PC-3 (cell line): ENCODE measurements at regions of chrX and their contacts with region 1.

Region 1: DNA sequence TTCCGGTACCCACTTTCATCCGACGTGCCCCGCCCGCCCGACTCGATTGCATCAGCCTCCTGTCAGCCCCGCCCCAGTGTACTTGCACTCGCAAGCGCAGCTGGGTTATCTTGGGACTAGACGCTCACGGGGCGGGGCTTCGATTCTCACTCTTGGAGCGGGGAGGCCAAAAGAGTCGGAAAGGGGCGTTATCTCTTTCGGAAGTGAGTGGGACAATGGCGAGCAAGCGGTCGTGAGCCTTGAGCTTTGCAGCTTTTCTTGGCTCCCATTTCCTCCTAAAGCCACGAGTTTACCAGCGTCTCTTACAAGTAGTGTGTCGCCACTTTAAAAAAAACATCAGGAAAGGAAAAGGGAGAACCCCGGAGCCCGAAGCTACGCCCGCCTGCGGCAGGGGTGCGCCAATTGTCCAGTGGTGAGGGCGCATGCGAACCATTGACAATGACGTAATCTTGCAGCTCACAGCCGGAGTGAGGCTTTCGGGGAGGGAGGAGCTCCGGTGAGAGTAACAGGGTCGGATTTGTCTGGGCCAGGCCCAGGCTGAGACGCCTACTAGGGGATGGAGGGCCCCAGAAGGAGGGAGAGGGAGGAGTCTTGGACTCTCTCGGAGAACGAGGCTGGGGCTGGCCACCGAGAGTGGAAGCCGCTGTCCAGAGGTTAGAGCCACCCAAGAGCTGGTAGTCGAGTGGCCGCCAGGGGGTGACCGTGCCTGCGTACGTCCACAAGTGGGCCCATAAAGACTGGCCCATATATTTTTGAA is 109.5 kb downstream of the GNL3L start:
- DNase-seq: peak; percentile 91
- ATAC-seq: peak; percentile 94
- H3K4me3 ChIP-seq: peak overlapping the region; percentile 77
- H3K27ac ChIP-seq: peak overlapping the region; percentile 82
- H3K4me1 ChIP-seq: peaks cover 5% of the 10 kb centered on the region
- H3K27me3 ChIP-seq: no peaks in the 10 kb centered on the region
- CTCF ChIP-seq: peak; percentile 78

Region 2: DNA sequence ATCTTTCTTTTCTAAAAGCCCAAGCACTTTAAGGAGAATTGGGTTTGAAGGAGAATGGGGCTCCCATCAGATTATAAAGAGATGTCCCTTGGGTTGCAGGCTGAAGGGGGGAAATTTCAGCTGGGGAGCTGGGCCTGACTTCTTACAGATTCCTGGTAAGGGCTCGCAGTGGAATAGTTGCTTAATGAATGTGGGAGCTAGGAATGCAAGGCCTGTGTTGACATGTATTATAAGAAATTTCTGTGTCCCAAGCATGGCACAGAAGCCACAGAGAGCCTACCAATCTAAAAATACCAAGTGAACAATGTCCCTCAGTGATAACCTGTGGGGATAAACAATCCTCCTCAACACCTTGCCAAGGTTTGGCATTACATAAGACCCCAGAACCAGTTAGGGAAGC is 242.4 kb before region 1 on chrX:
- CTCF ChIA-PET with region 1: no interaction called
- POLR2A ChIA-PET with region 1: no interaction called
- intact Hi-C with region 1: no loop called
- DNase-seq: no peak
- ATAC-seq: no peak
- H3K4me3 ChIP-seq: no peak overlapping the region
- H3K27ac ChIP-seq: no peak overlapping the region
- H3K4me1 ChIP-seq: no peaks in the 10 kb centered on the region
- H3K27me3 ChIP-seq: no peaks in the 10 kb centered on the region
- CTCF ChIP-seq: no peak

Region 3: GRCh38 chrX:54747733-54748393 is 108.3 kb after region 1 on chrX:
- CTCF ChIA-PET with region 1: no interaction called
- POLR2A ChIA-PET with region 1: no interaction called
- intact Hi-C with region 1: no loop called
- DNase-seq: no peak
- ATAC-seq: no peak
- H3K4me3 ChIP-seq: no peak overlapping the region
- H3K27ac ChIP-seq: no peak overlapping the region
- H3K4me1 ChIP-seq: no peaks in the 10 kb centered on the region
- H3K27me3 ChIP-seq: no peaks in the 10 kb centered on the region
- CTCF ChIP-seq: no peak

Region 4: DNA sequence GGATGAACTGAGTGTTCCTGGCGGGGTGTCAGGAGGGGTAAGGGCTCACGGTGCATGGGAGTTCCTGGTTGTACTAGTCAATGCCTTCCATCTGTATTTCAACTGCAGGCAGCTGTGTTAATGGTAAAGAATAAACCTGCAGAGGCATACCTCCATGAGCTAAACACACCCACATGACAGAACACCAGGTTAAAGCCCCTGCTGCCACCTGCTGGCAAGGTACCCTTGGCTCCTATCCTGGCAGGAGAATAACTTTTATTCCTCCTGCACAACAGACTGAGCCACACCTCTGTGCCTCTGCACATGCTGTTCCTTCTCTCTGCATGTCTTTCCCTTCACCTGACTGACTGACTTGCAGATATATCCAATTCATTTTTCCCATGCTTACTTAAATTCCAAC is 147.4 kb after region 1 on chrX:
- CTCF ChIA-PET with region 1: interaction called, 6 read pairs
- POLR2A ChIA-PET with region 1: no interaction called
- intact Hi-C with region 1: loop called (anchors 5 kb)
- DNase-seq: peak; percentile 53
- ATAC-seq: peak; percentile 73
- H3K4me3 ChIP-seq: no peak overlapping the region
- H3K27ac ChIP-seq: no peak overlapping the region
- H3K4me1 ChIP-seq: peaks cover 4% of the 10 kb centered on the region; the same call in 1 of the 2 replicates
- H3K27me3 ChIP-seq: no peaks in the 10 kb centered on the region
- CTCF ChIP-seq: peak; percentile 50

Region 5: DNA sequence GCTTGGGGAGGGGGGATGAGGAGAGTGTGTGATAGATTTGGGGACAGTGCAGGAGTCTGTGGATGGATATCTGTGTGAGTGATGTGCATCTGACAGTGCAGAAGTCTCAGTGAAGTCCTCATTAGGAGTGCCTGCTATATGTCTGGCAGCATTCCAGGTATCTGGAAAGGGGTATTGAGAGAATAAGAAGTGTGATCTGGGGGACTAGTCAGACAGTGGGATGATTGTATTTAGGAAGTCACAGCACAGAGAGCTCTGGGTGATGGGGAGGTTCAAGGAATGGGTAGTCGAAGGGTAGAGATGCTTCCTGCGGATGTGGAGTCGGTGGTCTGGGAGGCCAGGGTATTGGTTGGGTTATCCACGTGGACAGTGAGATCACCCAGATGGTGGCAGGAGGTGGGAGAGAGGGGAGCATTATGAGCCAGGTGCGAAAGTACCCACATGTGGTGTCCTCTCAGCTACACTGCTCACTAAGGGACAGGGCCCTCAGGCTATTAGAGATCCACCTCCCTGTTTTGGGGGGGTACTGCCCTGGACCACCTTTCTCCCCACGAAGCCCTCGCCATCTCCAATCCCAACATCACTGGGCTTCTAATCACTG is 177.8 kb after region 1 on chrX:
- CTCF ChIA-PET with region 1: no interaction called
- POLR2A ChIA-PET with region 1: no interaction called
- intact Hi-C with region 1: no loop called
- DNase-seq: no peak
- ATAC-seq: no peak
- H3K4me3 ChIP-seq: no peak overlapping the region
- H3K27ac ChIP-seq: no peak overlapping the region
- H3K4me1 ChIP-seq: no peaks in the 10 kb centered on the region
- H3K27me3 ChIP-seq: no peaks in the 10 kb centered on the region
- CTCF ChIP-seq: no peak

Region 6: DNA sequence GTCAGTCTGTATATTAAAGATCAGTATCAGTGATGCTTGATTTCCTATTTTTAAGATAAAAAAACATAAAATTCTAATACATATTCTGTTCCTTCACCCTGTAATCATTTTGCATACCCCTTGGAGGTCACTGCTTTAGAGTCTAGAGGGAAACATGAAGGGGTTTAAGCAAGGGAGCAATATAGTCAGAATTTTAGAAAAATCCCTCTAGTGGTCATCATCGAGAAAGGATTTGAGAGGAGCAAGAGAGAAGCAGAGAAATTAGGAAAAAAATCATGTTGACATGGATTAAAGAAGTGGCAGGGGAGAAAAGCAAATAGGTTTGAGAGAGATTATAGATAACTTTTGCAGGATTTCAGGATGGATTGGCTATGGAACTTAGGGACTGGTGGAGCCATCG is 371.8 kb after region 1 on chrX:
- CTCF ChIA-PET with region 1: no interaction called
- POLR2A ChIA-PET with region 1: interaction called, 4 read pairs
- intact Hi-C with region 1: loop called (anchors 1 kb)
- DNase-seq: peak; percentile 42
- ATAC-seq: no peak
- H3K4me3 ChIP-seq: no peak overlapping the region
- H3K27ac ChIP-seq: no peak overlapping the region
- H3K4me1 ChIP-seq: peaks cover 34% of the 10 kb centered on the region
- H3K27me3 ChIP-seq: no peaks in the 10 kb centered on the region
- CTCF ChIP-seq: peak; percentile 63